H1 (cell line): ENCODE measurements at regions of chr2 and their contacts with region 1.

Region 1: GRCh38 chr2:144449028-144449406 is 70.9 kb downstream of the ZEB2 start:
- DNase-seq: peak in 1 of 2 experiments; percentile 51
- H3K4me3 ChIP-seq: no peak overlapping the region
- H3K27ac ChIP-seq: no peak overlapping the region
- H3K4me1 ChIP-seq: peaks cover 0 to 28% (median 24%) of the 10 kb centered on the region in 4 experiments; a peak in 6 of 7 replicates
- H3K27me3 ChIP-seq: peaks cover 0 to 7% (median 4%) of the 10 kb centered on the region in 4 experiments; a peak in 3 of 7 replicates
- CTCF ChIP-seq: peak; percentile 41 to 65 (median 53)
- EP300 ChIP-seq: no peak
- POLR2A ChIP-seq: no peak
- RAD21 ChIP-seq: peak; percentile 41 to 57

Region 2: GRCh38 chr2:144438801-144439631 is 10.0 kb before region 1 on chr2:
- CTCF ChIA-PET with region 1: interaction called, 17 read pairs
- POLR2A ChIA-PET with region 1: no interaction called
- DNase-seq: no peak
- H3K4me3 ChIP-seq: no peak overlapping the region
- H3K27ac ChIP-seq: no peak overlapping the region
- H3K4me1 ChIP-seq: peaks cover 0 to 10% (median 7%) of the 10 kb centered on the region in 4 experiments; a peak in 4 of 7 replicates
- H3K27me3 ChIP-seq: no peaks in the 10 kb centered on the region; a peak in 1 of 7 replicates
- CTCF ChIP-seq: no peak
- EP300 ChIP-seq: no peak
- POLR2A ChIP-seq: no peak
- RAD21 ChIP-seq: no peak

Region 3: GRCh38 chr2:144470334-144470733 is 21.3 kb after region 1 on chr2:
- CTCF ChIA-PET with region 1: interaction called, 34 read pairs
- POLR2A ChIA-PET with region 1: interaction called, 3 read pairs
- DNase-seq: no peak
- H3K4me3 ChIP-seq: no peak overlapping the region
- H3K27ac ChIP-seq: no peak overlapping the region
- H3K4me1 ChIP-seq: peaks cover 0 to 25% (median 22%) of the 10 kb centered on the region in 4 experiments; a peak in 4 of 7 replicates
- H3K27me3 ChIP-seq: no peaks in the 10 kb centered on the region
- CTCF ChIP-seq: no peak
- EP300 ChIP-seq: no peak
- POLR2A ChIP-seq: no peak
- RAD21 ChIP-seq: no peak

Region 4: GRCh38 chr2:144490017-144490416 is 41.0 kb after region 1 on chr2:
- CTCF ChIA-PET with region 1: interaction called, 18 read pairs
- POLR2A ChIA-PET with region 1: no interaction called
- DNase-seq: no peak
- H3K4me3 ChIP-seq: no peak overlapping the region
- H3K27ac ChIP-seq: no peak overlapping the region
- H3K4me1 ChIP-seq: no peaks in the 10 kb centered on the region
- H3K27me3 ChIP-seq: no peaks in the 10 kb centered on the region
- CTCF ChIP-seq: no peak
- EP300 ChIP-seq: no peak
- POLR2A ChIP-seq: no peak
- RAD21 ChIP-seq: no peak

Region 5: DNA sequence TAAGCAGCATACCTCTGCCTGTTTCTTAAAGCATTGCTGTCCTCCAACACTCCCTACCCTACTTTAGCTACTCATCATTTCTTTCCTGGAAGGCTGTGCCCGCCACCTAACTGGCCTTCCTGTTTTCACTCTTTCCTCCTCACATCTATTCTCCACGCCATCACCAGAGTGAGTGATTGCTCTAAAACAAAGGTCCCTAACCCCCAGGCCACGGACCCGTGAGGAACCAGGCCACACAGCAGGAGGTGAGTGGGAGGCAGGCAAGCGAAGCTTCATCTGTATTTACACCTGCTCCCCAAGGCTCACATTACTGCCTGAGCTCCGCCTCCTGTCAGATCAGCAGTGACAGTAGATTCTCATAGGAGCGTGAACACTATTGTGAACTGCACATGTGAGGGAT is 84.2 kb after region 1 on chr2:
- CTCF ChIA-PET with region 1: no interaction called
- POLR2A ChIA-PET with region 1: no interaction called
- DNase-seq: no peak
- H3K4me3 ChIP-seq: no peak overlapping the region
- H3K27ac ChIP-seq: no peak overlapping the region
- H3K4me1 ChIP-seq: 0 out of 7 replicates have a peak, but pooled peaks cover 0 to 1% (median 0%) of the 10 kb centered on the region in 4 experiments
- H3K27me3 ChIP-seq: no peaks in the 10 kb centered on the region
- CTCF ChIP-seq: no peak
- EP300 ChIP-seq: no peak
- POLR2A ChIP-seq: no peak
- RAD21 ChIP-seq: no peak

Region 6: GRCh38 chr2:144583741-144584453 is 134.9 kb after region 1 on chr2:
- CTCF ChIA-PET with region 1: no interaction called
- POLR2A ChIA-PET with region 1: no interaction called
- DNase-seq: no peak
- H3K4me3 ChIP-seq: no peak overlapping the region
- H3K27ac ChIP-seq: no peak overlapping the region
- H3K4me1 ChIP-seq: peaks cover 2 to 14% (median 8%) of the 10 kb centered on the region in 4 experiments; a peak in 4 of 7 replicates
- H3K27me3 ChIP-seq: no peaks in the 10 kb centered on the region
- CTCF ChIP-seq: no peak
- EP300 ChIP-seq: no peak
- POLR2A ChIP-seq: no peak
- RAD21 ChIP-seq: no peak

Region 7: DNA sequence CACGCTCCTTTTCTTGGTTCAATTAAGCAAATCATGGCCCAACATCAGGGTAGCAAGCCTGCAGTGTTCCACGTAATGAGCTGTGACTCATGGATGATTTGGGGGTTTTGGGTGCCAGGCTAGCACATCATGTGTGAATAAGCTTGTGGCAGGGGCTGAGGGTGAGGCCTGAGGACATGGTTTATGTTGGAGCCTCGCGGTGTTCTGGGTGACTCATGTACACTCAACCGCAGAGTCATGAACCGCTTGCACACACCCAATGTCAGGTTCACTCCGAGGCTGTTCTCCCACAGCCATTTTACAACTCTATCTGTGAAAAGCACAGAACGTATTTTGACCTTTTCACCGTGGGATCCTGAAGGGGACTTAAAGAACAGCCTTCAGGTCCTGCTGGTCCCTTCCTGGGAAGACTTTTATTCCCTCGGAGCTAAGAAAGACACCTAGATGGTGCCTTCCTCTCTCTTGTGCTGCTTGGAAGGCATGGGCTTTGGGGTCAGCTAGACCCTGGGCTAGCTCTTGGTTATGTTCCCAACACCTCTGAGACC is 210.8 kb after region 1 on chr2:
- CTCF ChIA-PET with region 1: no interaction called
- POLR2A ChIA-PET with region 1: no interaction called
- DNase-seq: no peak
- H3K4me3 ChIP-seq: no peak overlapping the region
- H3K27ac ChIP-seq: no peak overlapping the region
- H3K4me1 ChIP-seq: peaks cover 0 to 2% (median under 1%) of the 10 kb centered on the region in 4 experiments; a peak in 2 of 7 replicates
- H3K27me3 ChIP-seq: no peaks in the 10 kb centered on the region; a peak in 1 of 7 replicates
- CTCF ChIP-seq: no peak
- EP300 ChIP-seq: no peak
- POLR2A ChIP-seq: no peak
- RAD21 ChIP-seq: no peak

Region 8: DNA sequence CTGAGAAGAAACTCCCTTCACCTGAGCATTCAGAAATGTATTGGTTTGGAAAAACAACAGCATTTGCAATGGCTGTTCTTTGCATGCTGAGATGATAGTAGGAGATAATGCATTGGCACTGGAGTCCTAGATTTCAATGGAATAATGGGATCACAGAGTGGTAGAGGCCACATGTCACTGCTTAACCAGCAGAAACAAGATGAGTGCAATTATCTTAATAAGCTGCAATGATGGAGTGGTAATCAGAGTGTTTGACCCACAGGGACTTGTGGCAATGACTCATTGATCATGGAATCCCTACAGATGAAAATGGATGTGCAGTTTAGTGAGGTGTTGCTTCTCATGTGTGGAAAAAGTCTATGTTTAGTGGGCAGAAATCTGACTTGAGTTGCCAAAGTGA is 289.7 kb after region 1 on chr2:
- CTCF ChIA-PET with region 1: no interaction called
- POLR2A ChIA-PET with region 1: no interaction called
- DNase-seq: no peak
- H3K4me3 ChIP-seq: no peak overlapping the region
- H3K27ac ChIP-seq: no peak overlapping the region
- H3K4me1 ChIP-seq: no peaks in the 10 kb centered on the region
- H3K27me3 ChIP-seq: no peaks in the 10 kb centered on the region
- CTCF ChIP-seq: no peak
- EP300 ChIP-seq: no peak
- POLR2A ChIP-seq: no peak
- RAD21 ChIP-seq: no peak